IMR-90 (cell line): ENCODE measurements at regions of chr14 and their contacts with region 1.

Region 1: DNA sequence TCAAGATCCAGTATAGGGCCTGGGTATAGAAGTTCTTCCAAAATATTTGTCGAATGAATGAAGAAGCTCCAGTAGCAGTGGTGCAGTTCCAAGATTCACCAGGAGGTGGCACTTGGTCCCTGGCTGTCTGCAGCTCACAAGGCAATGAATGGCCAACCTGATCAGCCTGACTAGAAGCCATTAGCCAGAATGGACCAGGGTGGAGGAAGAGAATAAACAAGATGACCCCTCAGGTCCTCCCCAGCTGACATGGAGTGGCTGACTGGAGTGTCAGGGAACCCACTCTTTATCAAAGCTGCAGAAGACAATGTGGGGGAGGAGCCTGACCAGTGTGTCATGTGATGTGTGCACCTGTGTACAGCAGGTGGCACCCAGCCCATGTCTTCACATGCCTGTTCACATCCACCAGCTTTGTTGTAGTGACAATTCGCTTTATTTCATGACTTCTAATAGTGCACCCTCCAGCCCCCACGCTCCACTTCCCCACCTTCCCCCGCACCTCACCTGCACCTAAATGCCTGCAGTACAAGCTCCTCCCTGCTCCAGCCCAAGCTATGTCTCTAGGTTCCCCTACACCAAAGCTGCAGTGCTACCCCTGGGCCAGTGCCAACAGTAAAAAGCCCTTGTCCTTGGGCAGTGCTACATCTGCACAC is 3.0 kb downstream of the LTBP2 start:
- DNase-seq: peak; percentile 89
- ATAC-seq: peak; percentile 45
- H3K4me3 ChIP-seq: no peak overlapping the region
- H3K27ac ChIP-seq: no peak overlapping the region
- H3K4me1 ChIP-seq: peaks cover 35% of the 10 kb centered on the region
- H3K27me3 ChIP-seq: no peaks in the 10 kb centered on the region
- CTCF ChIP-seq: peak; percentile 96
- POLR2A ChIP-seq: peak; percentile 60; the same call in 1 of the 2 replicates
- RAD21 ChIP-seq: peak; percentile 99

Region 2: GRCh38 chr14:74402401-74403251 is 206.5 kb before region 1 on chr14:
- CTCF ChIA-PET with region 1: no interaction called
- POLR2A ChIA-PET with region 1: no interaction called
- dilution Hi-C with region 1: no loop called
- in situ Hi-C with region 1: no loop called
- intact Hi-C with region 1: no loop called
- DNase-seq: no peak
- ATAC-seq: no peak
- H3K4me3 ChIP-seq: no peak overlapping the region
- H3K27ac ChIP-seq: no peak overlapping the region
- H3K4me1 ChIP-seq: peaks cover 4% of the 10 kb centered on the region
- H3K27me3 ChIP-seq: peaks cover 75% of the 10 kb centered on the region
- CTCF ChIP-seq: no peak
- POLR2A ChIP-seq: no peak
- RAD21 ChIP-seq: no peak

Region 3: DNA sequence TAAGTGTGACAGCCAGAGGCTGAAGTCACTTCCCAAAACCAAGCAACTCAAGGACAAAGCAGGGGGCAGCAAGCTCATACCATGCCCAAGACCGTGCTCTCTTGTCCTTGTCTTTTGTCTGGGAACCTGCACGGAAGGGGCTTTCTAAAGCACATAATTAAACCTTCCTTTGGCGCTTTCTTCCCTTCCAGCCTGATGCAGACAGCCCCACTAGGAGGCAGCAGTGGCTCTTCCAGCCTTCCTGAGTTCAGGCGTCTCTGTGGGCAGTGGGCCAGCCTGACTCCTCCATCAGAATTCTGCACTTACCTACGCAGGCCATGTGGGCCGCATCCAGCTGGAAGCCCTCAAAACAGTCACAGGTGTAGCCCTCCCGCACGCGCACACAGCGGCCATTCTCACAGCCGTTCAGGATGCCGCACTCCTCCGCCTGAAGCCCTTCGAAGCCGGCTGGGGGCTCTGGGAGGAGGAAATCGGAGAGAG is 107.9 kb before region 1 on chr14:
- CTCF ChIA-PET with region 1: interaction called, 3 read pairs
- POLR2A ChIA-PET with region 1: interaction called, 3 read pairs
- dilution Hi-C with region 1: no loop called
- in situ Hi-C with region 1: loop called (anchors 5 kb)
- intact Hi-C with region 1: loop called (anchors 1 kb)
- DNase-seq: peak; percentile 83
- ATAC-seq: peak; percentile 79
- H3K4me3 ChIP-seq: no peak overlapping the region
- H3K27ac ChIP-seq: no peak overlapping the region
- H3K4me1 ChIP-seq: peaks cover 3% of the 10 kb centered on the region; the same call in 1 of the 2 replicates
- H3K27me3 ChIP-seq: no peaks in the 10 kb centered on the region
- CTCF ChIP-seq: peak; percentile 91
- POLR2A ChIP-seq: no peak
- RAD21 ChIP-seq: peak; percentile 87

Region 4: DNA sequence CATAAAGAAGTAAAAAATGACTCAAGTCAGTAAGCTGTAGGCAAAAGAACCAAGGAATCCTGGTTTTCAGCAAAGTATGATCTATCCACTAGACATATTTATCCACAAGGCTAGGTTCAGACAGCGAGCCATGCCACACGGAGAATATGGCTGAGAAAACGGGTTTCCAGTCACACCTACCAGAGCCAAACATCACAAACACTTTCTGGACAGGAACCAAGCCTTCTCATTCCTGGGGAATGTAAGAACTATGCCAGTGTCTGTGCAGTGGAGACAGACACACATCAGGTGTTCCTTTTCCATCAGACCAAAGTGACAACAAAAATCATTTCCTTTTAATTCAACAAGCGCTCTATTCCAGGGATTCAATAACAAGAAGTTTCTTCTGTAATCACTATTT is 62.7 kb after region 1 on chr14:
- CTCF ChIA-PET with region 1: interaction called, 3 read pairs
- POLR2A ChIA-PET with region 1: no interaction called
- dilution Hi-C with region 1: no loop called
- in situ Hi-C with region 1: no loop called
- intact Hi-C with region 1: loop called (anchors 2 kb)
- DNase-seq: peak; percentile 79
- ATAC-seq: peak; percentile 65
- H3K4me3 ChIP-seq: no peak overlapping the region
- H3K27ac ChIP-seq: peak overlapping the region; percentile 50; the same call in 1 of the 2 replicates
- H3K4me1 ChIP-seq: peaks cover 6% of the 10 kb centered on the region
- H3K27me3 ChIP-seq: no peaks in the 10 kb centered on the region
- CTCF ChIP-seq: no peak
- POLR2A ChIP-seq: no peak
- RAD21 ChIP-seq: no peak

Region 5: DNA sequence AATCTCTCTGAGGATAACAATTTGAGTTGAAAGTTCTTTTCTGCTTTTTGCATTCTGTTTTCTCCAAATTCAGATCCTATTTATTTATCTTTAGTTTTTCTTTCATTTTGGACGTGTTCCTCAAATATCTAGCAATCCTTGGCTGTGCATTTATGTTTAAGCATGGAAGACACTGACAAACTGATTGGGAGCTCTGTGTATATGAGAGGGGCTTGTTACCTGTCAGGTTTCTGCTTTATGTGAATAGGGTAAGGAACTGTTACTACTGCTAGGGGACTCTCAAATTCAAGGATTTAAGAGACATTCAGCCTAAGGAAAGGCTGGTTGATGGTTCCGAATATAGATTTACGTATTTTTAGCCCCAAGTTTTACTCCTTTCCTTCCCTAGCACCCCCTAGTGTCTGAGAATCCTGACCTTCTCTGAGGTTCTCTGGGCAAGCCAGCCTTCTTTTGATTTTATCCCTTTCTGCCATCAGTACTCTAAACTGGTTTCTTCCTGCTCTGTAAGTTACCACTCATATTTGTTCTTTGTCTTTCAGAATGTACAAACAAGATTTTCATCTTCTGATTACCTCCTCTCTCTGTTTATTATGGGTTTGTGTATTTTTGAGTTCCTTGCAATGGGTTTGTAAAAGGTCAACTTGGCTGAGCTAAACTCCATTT is 184.6 kb after region 1 on chr14:
- CTCF ChIA-PET with region 1: no interaction called
- POLR2A ChIA-PET with region 1: no interaction called
- dilution Hi-C with region 1: no loop called
- in situ Hi-C with region 1: loop called (anchors 5 kb)
- intact Hi-C with region 1: no loop called
- DNase-seq: no peak
- ATAC-seq: no peak
- H3K4me3 ChIP-seq: no peak overlapping the region
- H3K27ac ChIP-seq: no peak overlapping the region
- H3K4me1 ChIP-seq: peaks cover 10% of the 10 kb centered on the region
- H3K27me3 ChIP-seq: no peaks in the 10 kb centered on the region
- CTCF ChIP-seq: peak; percentile 26; the same call in 1 of the 2 replicates
- POLR2A ChIP-seq: no peak
- RAD21 ChIP-seq: no peak

Region 6: GRCh38 chr14:74881431-74882361 is 272.6 kb after region 1 on chr14 and contains the start of gene DLST:
- CTCF ChIA-PET with region 1: interaction called, 3 read pairs
- POLR2A ChIA-PET with region 1: no interaction called
- dilution Hi-C with region 1: no loop called
- in situ Hi-C with region 1: no loop called
- intact Hi-C with region 1: loop called (anchors 10 kb)
- DNase-seq: peak; percentile 84
- ATAC-seq: peak; percentile 87
- H3K4me3 ChIP-seq: peak within 1 kb of the TSS; percentile 94
- H3K27ac ChIP-seq: peak within 1 kb of the TSS; percentile 89
- H3K4me1 ChIP-seq: peaks cover 22% of the 10 kb centered on the region
- H3K27me3 ChIP-seq: no peaks in the 10 kb centered on the region
- CTCF ChIP-seq: no peak
- POLR2A ChIP-seq: peak; percentile 93
- RAD21 ChIP-seq: no peak
- total RNA-seq, gene DLST: 58.6 and 63.0 TPM in 2 replicates